B cell (primary cell): ENCODE measurements at regions of chr9 and their contacts with region 1.

Region 1: GRCh38 chr9:34048923-34049697 is 423 bp upstream of the UBAP2 start:
- DNase-seq: peak; percentile 99
- ATAC-seq: peak; percentile 81
- H3K4me3 ChIP-seq: peak overlapping the region; percentile 74 to 95 (median 90)
- H3K4me3 Mint-ChIP-seq: peak overlapping the region; percentile 100
- H3K27ac ChIP-seq: peak overlapping the region; percentile 87 to 91
- H3K27ac Mint-ChIP-seq: peak overlapping the region; percentile 100
- H3K4me1 ChIP-seq: peaks cover 15 to 22% of the 10 kb centered on the region in 2 donors
- H3K4me1 Mint-ChIP-seq: peaks cover 26% of the 10 kb centered on the region
- H3K27me3 ChIP-seq: no peaks in the 10 kb centered on the region
- H3K27me3 Mint-ChIP-seq: no peaks in the 10 kb centered on the region
- CTCF ChIP-seq: no peak

Region 2: DNA sequence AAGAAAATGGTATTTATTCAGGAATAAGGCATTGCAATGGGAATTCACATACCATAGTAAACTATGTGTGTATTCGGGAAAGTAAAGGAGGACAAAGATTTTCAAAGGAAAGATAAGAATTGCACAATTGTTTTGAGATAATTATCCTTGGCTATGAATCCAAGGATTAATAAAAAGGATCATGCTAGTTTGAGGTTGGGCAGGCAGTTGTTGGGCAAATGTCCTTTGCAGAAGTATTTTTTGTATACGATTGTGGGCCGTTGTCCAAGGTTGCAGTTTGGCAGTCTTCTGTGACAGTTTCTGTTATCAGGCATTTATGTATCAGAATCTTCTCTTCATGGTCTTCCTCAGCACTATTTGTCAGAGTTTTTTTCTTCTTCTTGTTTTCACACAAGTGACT is 10.2 kb after region 1 on chr9:
- CTCF ChIA-PET with region 1: no interaction called
- POLR2A ChIA-PET with region 1: no interaction called
- intact Hi-C with region 1: no loop called
- DNase-seq: no peak
- ATAC-seq: no peak
- H3K4me3 ChIP-seq: no peak overlapping the region
- H3K4me3 Mint-ChIP-seq: no peak overlapping the region
- H3K27ac ChIP-seq: no peak overlapping the region
- H3K27ac Mint-ChIP-seq: no peak overlapping the region
- H3K4me1 ChIP-seq: no peaks in the 10 kb centered on the region
- H3K4me1 Mint-ChIP-seq: no peaks in the 10 kb centered on the region
- H3K27me3 ChIP-seq: peaks cover 0 to 7% (median 3%) of the 10 kb centered on the region in 4 experiments
- H3K27me3 Mint-ChIP-seq: peaks cover 6% of the 10 kb centered on the region
- CTCF ChIP-seq: no peak

Region 3: GRCh38 chr9:34171753-34172535 is 122.8 kb after region 1 on chr9:
- CTCF ChIA-PET with region 1: interaction called, 3 read pairs
- POLR2A ChIA-PET with region 1: no interaction called
- intact Hi-C with region 1: loop called (anchors 2 kb)
- DNase-seq: peak; percentile 86
- ATAC-seq: peak; percentile 99
- H3K4me3 ChIP-seq: peak overlapping the region in 1 of 5 experiments; percentile 10
- H3K4me3 Mint-ChIP-seq: peak overlapping the region; percentile 43
- H3K27ac ChIP-seq: no peak overlapping the region
- H3K27ac Mint-ChIP-seq: peak overlapping the region; percentile 12
- H3K4me1 ChIP-seq: peaks cover 10 to 13% of the 10 kb centered on the region in 2 donors
- H3K4me1 Mint-ChIP-seq: peaks cover 5% of the 10 kb centered on the region
- H3K27me3 ChIP-seq: peaks cover 0 to 31% (median 2%) of the 10 kb centered on the region in 4 experiments
- H3K27me3 Mint-ChIP-seq: no peaks in the 10 kb centered on the region
- CTCF ChIP-seq: no peak

Region 4: DNA sequence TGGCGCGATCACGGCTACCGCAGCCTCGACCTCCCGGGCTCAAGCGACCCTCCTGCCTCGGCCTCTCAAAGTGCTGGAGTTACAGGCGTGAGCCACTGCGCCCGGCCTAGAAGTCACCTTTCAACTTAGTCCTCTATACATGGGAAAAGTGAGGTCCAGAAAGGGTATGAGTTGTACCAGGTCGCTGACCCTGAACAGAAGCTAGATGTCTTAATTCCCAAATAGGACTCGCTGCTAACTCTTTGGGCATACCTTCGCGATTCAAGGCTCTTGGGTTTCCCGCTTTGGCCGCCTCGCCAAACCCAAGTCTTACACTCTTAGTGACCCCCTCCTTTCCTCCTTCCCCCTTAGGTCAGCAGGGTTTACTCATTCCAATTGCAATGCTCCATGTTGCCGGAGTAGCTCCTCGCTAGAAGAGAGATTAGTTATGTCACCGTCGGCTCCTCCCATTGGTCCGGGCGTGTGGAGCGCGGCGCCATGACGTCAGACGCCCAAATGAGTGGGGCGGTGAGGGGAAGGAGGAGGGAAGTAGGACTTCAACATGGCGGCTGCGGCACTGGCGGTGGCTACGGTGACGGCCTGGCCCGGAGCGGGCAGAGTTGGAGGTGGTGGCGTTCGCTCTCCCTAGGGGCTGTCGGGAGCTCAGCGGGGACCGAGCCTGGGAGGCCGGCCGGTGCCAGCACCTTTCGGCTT is 129.6 kb after region 1 on chr9 and contains the start of gene UBAP1:
- CTCF ChIA-PET with region 1: interaction called, 4 read pairs
- POLR2A ChIA-PET with region 1: interaction called, 8 read pairs
- intact Hi-C with region 1: loop called (anchors 1 kb)
- DNase-seq: peak; percentile 95
- ATAC-seq: peak; percentile 99
- H3K4me3 ChIP-seq: peak within 1 kb of the TSS; percentile 68 to 94 (median 75)
- H3K4me3 Mint-ChIP-seq: peak within 1 kb of the TSS; percentile 92
- H3K27ac ChIP-seq: peak within 1 kb of the TSS; percentile 84 to 88
- H3K27ac Mint-ChIP-seq: peak within 1 kb of the TSS; percentile 93
- H3K4me1 ChIP-seq: peaks cover 8 to 21% of the 10 kb centered on the region in 2 donors
- H3K4me1 Mint-ChIP-seq: peaks cover 18% of the 10 kb centered on the region
- H3K27me3 ChIP-seq: peaks cover 0 to 17% (median 2%) of the 10 kb centered on the region in 4 experiments
- H3K27me3 Mint-ChIP-seq: no peaks in the 10 kb centered on the region
- CTCF ChIP-seq: no peak
- total RNA-seq, gene UBAP1: 27.0 and 29.3 TPM in 2 replicates

Region 5: DNA sequence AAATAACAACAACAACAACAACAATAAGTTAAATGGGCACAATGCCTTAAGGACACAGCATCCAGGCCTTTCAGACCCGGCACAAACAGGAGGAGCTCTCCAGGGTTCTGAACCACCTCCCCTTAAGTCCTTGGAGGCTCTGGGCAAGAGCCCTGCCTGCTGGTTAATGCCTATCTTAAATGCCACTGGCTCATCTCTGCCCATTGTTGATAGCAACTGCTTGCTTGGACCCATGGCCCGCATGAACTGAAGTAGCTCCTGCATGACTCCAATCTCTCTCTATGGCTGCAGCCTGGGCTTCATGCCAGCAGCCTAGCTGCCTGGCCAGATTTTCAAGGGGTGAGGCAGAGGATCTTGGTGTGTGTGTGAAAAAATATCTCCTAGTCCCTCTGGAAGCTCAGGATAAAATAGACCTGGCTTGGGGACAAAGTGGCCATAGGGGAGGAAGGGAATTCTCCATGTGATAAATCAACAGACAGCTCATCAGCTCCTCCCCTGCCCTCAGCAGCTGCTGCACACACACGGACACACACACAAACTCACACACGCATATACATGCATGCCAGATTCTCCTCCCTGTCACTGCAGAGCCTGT is 381.8 kb after region 1 on chr9:
- CTCF ChIA-PET with region 1: no interaction called
- POLR2A ChIA-PET with region 1: no interaction called
- intact Hi-C with region 1: no loop called
- DNase-seq: no peak
- ATAC-seq: no peak
- H3K4me3 ChIP-seq: no peak overlapping the region
- H3K4me3 Mint-ChIP-seq: no peak overlapping the region
- H3K27ac ChIP-seq: no peak overlapping the region
- H3K27ac Mint-ChIP-seq: no peak overlapping the region
- H3K4me1 ChIP-seq: no peaks in the 10 kb centered on the region
- H3K4me1 Mint-ChIP-seq: no peaks in the 10 kb centered on the region
- H3K27me3 ChIP-seq: no peaks in the 10 kb centered on the region
- H3K27me3 Mint-ChIP-seq: no peaks in the 10 kb centered on the region
- CTCF ChIP-seq: no peak